Activated CD8-positive, alpha-beta memory T cell treated with anti-CD3 and anti-CD28 coated beads, Interleukin-2, amount 10 ng/mL, durations not matched to agents 7 days and 5 days (primary cell): ENCODE measurements at regions of chr12 and their contacts with region 1.

Region 1: DNA sequence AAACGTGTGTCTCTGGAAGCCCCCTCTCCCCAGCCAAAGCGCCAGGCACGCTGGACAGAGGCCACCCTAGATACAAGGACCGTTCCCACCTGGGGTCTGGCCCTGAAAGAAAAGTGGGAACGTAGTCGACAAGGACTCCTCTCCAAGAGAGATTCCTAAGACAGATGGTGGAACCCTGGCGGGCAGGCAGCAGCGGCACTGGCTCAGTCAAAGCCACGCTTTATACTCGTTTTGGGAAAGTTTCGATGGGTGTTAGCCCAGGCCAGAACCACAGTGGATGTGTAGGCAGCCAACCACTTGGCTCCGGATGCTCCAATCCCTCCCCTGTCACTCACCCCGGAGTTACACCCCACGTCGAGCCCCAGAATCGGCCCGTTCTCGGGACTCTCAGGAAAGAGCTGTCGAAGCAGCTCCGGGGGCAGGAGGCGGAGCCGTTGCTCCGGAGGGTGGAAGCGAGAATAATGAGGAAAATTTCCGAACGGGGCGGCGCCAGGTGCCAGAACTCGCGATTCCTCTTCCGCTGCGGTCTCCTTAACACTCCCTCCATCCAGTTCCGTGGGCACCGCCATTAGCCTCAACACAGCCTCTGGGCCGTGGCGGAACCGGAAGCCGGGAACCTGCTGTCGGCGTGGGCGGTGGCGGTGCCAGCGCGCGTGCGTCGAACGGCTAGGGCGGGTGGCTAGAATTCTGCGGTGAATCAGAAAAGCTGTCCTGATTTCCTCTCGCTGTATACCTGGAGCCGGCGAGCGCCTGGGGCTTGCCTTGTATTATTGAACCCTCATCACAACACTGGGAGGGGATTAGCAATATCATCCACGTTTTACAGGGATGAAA is at the start of gene BCDIN3D:
- DNase-seq: peak; percentile 94
- ATAC-seq: peak; percentile 96
- H3K4me3 Mint-ChIP-seq: peak within 1 kb of the TSS; percentile 91
- H3K27ac Mint-ChIP-seq: peak within 1 kb of the TSS; percentile 90
- H3K4me1 Mint-ChIP-seq: peaks cover 37% of the 10 kb centered on the region
- H3K27me3 Mint-ChIP-seq: no peaks in the 10 kb centered on the region
- total RNA-seq, gene BCDIN3D: 8.2 to 8.3 TPM

Region 2: GRCh38 chr12:49693994-49694393 is 148.7 kb before region 1 on chr12:
- CTCF ChIA-PET with region 1: no interaction called
- DNase-seq: no peak
- ATAC-seq: no peak
- H3K4me3 Mint-ChIP-seq: no peak overlapping the region
- H3K27ac Mint-ChIP-seq: no peak overlapping the region
- H3K4me1 Mint-ChIP-seq: peaks cover 20% of the 10 kb centered on the region
- H3K27me3 Mint-ChIP-seq: no peaks in the 10 kb centered on the region

Region 3: GRCh38 chr12:49763006-49763591 is 79.6 kb before region 1 on chr12:
- CTCF ChIA-PET with region 1: interaction called, 15 read pairs
- DNase-seq: peak; percentile 88
- ATAC-seq: peak; percentile 74
- H3K4me3 Mint-ChIP-seq: peak overlapping the region; percentile 17
- H3K27ac Mint-ChIP-seq: peak overlapping the region; percentile 85
- H3K4me1 Mint-ChIP-seq: peaks cover 52% of the 10 kb centered on the region
- H3K27me3 Mint-ChIP-seq: no peaks in the 10 kb centered on the region

Region 4: DNA sequence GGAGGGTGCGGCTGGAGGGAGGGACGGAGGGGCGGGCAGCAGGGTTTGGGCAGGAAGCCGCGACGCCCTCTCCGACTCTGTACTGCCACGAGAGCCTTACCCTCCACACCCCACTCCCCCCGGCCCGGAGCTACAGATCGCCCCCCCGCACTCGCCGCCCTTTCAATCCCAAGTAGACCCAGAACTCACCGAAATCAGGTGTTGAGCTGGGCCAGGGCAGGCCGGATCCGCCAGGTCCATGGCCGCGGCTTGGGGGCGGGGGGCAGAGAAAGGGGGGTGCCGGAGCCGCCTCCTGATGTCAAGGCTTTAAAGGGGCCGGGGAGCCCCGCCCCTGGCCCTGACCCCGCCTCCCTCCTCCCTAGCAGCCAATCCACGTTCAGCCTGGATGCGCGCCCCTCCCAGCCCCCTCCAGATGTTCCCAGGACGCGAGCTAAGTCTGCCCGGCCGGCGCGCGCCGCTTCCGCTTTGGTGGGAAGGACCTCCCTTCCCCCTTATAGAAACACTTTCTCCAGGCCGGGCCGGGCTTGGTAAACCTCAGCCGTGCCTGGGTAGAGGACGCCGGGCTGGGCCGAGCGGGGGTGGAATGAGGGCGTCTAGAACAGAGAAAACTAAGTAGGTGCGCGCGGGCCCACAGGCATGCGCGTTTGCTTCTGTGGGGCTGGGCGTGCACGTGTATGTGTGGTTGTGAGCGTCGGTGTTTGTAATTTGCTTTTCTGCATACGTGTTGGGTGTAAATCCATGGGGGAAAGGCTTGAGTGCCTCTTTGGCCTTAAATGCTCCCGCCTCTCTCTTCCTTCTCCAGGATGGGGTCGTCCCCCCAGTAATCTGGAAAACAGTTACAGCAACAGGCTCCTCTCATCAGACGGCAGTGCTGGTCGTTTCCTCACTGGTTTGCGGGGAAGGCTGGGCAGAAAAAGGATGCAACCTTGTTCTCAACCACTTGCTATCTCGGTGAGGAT is 14.3 kb before region 1 on chr12 and contains the start of gene NCKAP5L:
- CTCF ChIA-PET with region 1: interaction called, 16 read pairs
- DNase-seq: peak; percentile 94
- ATAC-seq: peak; percentile 97
- H3K4me3 Mint-ChIP-seq: peak within 1 kb of the TSS; percentile 82
- H3K27ac Mint-ChIP-seq: peak within 1 kb of the TSS; percentile 70
- H3K4me1 Mint-ChIP-seq: peaks cover 15% of the 10 kb centered on the region
- H3K27me3 Mint-ChIP-seq: peaks cover 27% of the 10 kb centered on the region
- total RNA-seq, gene NCKAP5L: 1.1 to 1.4 TPM